GM12878 (cell line): ENCODE measurements at regions of chr7 and their contacts with region 1.

Region 1: GRCh38 chr7:77252506-77252905 is 52.9 kb upstream of the FGL2 start:
- DNase-seq: no peak
- ATAC-seq: no peak
- H3K4me3 ChIP-seq: no peak overlapping the region
- H3K27ac ChIP-seq: no peak overlapping the region
- H3K4me1 ChIP-seq: no peaks in the 10 kb centered on the region
- H3K27me3 ChIP-seq: no peaks in the 10 kb centered on the region
- CTCF ChIP-seq: no peak
- EP300 ChIP-seq: no peak
- POLR2A ChIP-seq: no peak
- RAD21 ChIP-seq: no peak

Region 2: GRCh38 chr7:77269360-77270093 is 17.0 kb after region 1 on chr7:
- CTCF ChIA-PET with region 1: interaction called, 12 read pairs
- POLR2A ChIA-PET with region 1: interaction called, 4 read pairs
- RAD21 ChIA-PET with region 1: interaction called, 7 read pairs
- SMC1A ChIA-PET with region 1: interaction called, 11 read pairs
- in situ Hi-C with region 1: no loop called
- intact Hi-C with region 1: no loop called
- DNase-seq: peak; percentile 23
- ATAC-seq: peak; percentile 79
- H3K4me3 ChIP-seq: no peak overlapping the region
- H3K27ac ChIP-seq: no peak overlapping the region
- H3K4me1 ChIP-seq: peaks cover 19% of the 10 kb centered on the region
- H3K27me3 ChIP-seq: no peaks in the 10 kb centered on the region
- CTCF ChIP-seq: no peak
- EP300 ChIP-seq: no peak
- POLR2A ChIP-seq: no peak
- RAD21 ChIP-seq: no peak

Region 3: GRCh38 chr7:77549106-77549870 is 296.8 kb after region 1 on chr7:
- CTCF ChIA-PET with region 1: no interaction called
- POLR2A ChIA-PET with region 1: no interaction called
- RAD21 ChIA-PET with region 1: no interaction called
- SMC1A ChIA-PET with region 1: no interaction called
- in situ Hi-C with region 1: no loop called
- intact Hi-C with region 1: no loop called
- DNase-seq: no peak
- ATAC-seq: peak; percentile 16; the same call in 1 of the 3 replicates
- H3K4me3 ChIP-seq: no peak overlapping the region
- H3K27ac ChIP-seq: no peak overlapping the region
- H3K4me1 ChIP-seq: peaks cover 5% of the 10 kb centered on the region; the same call in 1 of the 2 replicates
- H3K27me3 ChIP-seq: no peaks in the 10 kb centered on the region
- CTCF ChIP-seq: no peak
- EP300 ChIP-seq: no peak
- POLR2A ChIP-seq: no peak
- RAD21 ChIP-seq: no peak